Naive thymus-derived CD8-positive, alpha-beta T cell (primary cell): ENCODE measurements at regions of chr3 and their contacts with region 1.

Region 1: GRCh38 chr3:186617038-186617946 is 4.4 kb downstream of the AHSG start:
- DNase-seq: peak; percentile 72 to 90 (median 82)
- ATAC-seq: peak; percentile 98
- H3K4me3 Mint-ChIP-seq: peak overlapping the region; percentile 54 to 79 (median 72)
- H3K27ac Mint-ChIP-seq: peak overlapping the region in 6 of 10 donors; percentile 47 to 87 (median 73)
- H3K4me1 Mint-ChIP-seq: peaks cover 13 to 21% (median 19%) of the 10 kb centered on the region in 4 donors
- H3K27me3 Mint-ChIP-seq: peaks cover 8 to 43% (median 26%) of the 10 kb centered on the region in 5 donors

Region 2: DNA sequence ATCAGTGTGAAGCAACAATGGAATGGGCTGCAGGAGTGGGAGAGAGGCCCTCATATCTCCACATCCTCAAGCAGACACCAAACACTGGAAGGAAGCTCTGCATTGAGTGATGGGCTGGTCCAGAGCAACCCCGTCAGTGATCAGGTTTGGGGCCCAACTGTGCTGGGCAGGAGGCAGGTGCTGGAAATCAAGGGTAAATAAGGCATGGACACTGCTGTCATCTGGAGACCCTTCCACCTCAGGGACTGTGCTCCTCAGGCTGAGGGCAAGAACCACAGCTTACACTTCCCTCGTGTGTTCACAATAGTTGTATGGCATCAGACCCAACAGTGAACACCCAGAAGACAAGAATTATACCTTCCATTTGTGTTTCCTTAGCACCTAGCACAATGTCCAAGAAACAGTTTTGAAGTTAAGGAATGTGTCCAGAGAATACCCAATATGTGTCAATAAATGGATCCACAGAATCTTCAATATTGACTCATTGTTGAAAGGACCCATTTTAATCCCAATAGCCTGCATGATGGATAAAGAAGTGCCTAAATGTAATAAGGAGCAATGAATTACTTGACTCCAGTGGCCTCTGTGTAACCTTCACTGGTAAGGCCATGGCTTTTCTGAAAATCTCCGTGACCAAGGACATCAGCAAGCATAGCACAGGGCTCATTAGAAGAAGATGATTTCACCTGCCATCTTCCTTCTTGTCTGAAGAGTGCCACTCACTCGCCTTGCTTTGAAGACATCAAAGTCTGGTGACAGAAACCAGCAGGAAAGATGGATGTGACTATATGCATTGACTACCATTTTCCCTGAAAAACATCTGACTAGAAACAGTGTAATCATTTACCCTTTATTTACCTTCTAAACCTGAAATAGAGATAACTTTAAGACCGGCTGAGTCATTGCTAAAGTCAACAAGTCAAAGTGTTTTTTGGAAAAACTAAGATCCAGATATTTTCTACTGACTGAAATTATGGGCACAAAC is 11.4 kb before region 1 on chr3:
- POLR2A ChIA-PET with region 1: no interaction called
- DNase-seq: no peak
- ATAC-seq: no peak
- H3K4me3 Mint-ChIP-seq: no peak overlapping the region
- H3K27ac Mint-ChIP-seq: no peak overlapping the region
- H3K4me1 Mint-ChIP-seq: no peaks in the 10 kb centered on the region
- H3K27me3 Mint-ChIP-seq: peaks cover 0 to 2% (median 0%) of the 10 kb centered on the region in 5 donors

Region 3: DNA sequence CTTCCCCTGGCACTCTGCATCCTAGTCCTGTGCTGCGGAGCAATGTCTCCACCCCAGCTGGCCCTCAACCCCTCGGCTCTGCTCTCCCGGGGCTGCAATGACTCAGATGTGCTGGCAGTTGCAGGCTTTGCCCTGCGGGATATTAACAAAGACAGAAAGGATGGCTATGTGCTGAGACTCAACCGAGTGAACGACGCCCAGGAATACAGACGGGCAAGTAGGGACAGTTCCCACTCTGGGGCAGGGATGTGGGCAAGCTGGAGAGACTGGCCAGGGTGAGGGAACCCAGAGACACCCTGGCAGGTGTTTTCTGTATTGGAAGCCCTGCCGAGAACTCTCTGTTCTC is 23.2 kb after region 1 on chr3:
- POLR2A ChIA-PET with region 1: no interaction called
- DNase-seq: no peak
- ATAC-seq: no peak
- H3K4me3 Mint-ChIP-seq: no peak overlapping the region
- H3K27ac Mint-ChIP-seq: no peak overlapping the region
- H3K4me1 Mint-ChIP-seq: no peaks in the 10 kb centered on the region
- H3K27me3 Mint-ChIP-seq: peaks cover 0 to 22% (median 8%) of the 10 kb centered on the region in 5 donors

Region 4: DNA sequence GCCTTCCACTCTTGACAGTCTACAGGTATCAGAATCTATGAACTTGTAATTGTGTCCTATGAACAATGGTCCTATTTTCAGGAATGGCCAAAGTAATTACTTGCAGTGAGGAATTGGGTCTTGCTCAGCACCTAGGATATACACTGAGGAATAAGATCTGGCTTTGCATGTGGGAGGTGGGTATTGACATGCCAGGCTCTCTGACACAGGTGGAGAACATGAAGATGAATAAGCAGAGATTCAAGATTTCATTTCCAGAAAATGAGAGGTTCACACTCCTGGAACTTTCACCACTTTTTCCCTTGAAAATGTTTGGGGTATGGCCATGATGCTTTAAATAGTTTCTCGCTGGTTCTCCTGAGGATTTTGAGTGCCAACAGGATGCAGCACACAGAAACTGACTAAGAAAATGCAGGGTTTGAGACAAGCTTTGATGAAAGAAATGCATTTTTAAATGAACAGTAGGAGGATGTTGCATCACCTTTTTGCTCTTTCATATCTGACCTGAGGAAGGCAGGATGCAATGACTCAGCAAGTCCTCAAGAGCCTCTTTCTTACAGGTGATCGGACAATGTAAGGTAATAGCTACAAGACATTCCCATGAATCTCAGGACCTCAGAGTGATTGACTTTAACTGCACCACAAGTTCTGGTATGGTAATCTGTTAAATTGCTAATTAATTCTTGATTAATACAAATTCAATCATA is 52.2 kb after region 1 on chr3:
- POLR2A ChIA-PET with region 1: no interaction called
- DNase-seq: no peak
- ATAC-seq: no peak
- H3K4me3 Mint-ChIP-seq: no peak overlapping the region
- H3K27ac Mint-ChIP-seq: no peak overlapping the region
- H3K4me1 Mint-ChIP-seq: peaks cover 0 to 4% (median under 1%) of the 10 kb centered on the region in 4 donors
- H3K27me3 Mint-ChIP-seq: peaks cover 4 to 20% (median 19%) of the 10 kb centered on the region in 5 donors

Region 5: GRCh38 chr3:186705882-186706780 is 88.8 kb after region 1 on chr3:
- POLR2A ChIA-PET with region 1: no interaction called
- DNase-seq: peak in 2 of 10 donors; percentile 14 to 22
- ATAC-seq: peak; percentile 61 to 75
- H3K4me3 Mint-ChIP-seq: no peak overlapping the region
- H3K27ac Mint-ChIP-seq: peak overlapping the region in 1 of 10 donors; percentile 26
- H3K4me1 Mint-ChIP-seq: peaks cover 6 to 11% (median 10%) of the 10 kb centered on the region in 4 donors
- H3K27me3 Mint-ChIP-seq: peaks cover 17 to 49% (median 28%) of the 10 kb centered on the region in 5 donors

Region 6: DNA sequence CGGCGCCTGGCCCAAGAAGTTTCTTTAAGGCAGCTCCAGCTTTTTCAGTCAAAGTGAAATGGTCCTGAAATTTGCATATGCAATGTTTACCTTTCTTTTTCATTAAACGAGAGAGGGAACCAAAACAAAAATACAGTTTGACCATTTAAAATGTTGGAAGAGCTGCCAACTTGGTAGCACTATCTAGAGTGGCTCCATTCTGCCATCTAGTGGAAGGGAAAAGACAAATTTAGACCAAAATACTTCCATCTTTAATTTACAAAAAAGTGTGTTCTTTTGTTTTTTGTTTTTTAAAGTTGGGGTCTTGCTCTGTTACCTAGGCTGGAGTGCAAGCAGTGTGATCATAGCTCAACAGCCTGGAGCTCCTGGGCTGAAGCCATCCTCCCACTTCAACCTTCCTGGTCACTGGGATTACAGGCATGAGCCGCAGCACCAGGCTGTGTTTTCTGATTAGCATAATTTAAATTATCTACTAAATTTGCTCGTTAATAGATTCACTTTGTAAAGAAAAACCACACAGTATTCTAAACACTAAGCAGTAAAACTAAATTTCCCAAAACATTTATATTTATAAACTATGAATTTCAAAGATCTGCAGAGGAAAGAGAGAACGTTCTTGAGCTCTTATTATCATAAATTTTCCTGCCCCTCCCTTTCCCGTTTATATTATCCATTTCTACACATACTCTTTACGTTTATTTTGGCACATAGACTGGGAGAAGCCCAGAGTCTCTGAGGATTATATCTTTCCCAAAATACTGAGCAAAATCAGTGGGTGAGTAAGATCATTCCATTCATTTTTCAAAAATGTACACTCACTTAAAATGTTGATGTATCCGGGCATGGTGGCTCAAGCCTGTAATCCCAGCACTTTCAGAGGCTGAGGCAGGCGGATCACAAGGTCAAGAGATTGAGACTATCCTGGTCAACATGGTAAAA is 204.4 kb after region 1 on chr3:
- POLR2A ChIA-PET with region 1: interaction called, 14 read pairs
- DNase-seq: peak in 4 of 10 donors; percentile 23 to 55 (median 54)
- ATAC-seq: peak in 1 of 2 donors; percentile 34
- H3K4me3 Mint-ChIP-seq: no peak overlapping the region
- H3K27ac Mint-ChIP-seq: no peak overlapping the region
- H3K4me1 Mint-ChIP-seq: peaks cover 5 to 17% (median 14%) of the 10 kb centered on the region in 4 donors
- H3K27me3 Mint-ChIP-seq: peaks cover 14 to 25% (median 23%) of the 10 kb centered on the region in 5 donors